ENCODE measurements at regions of chr11 and their contacts with region 1.

Region 1: DNA sequence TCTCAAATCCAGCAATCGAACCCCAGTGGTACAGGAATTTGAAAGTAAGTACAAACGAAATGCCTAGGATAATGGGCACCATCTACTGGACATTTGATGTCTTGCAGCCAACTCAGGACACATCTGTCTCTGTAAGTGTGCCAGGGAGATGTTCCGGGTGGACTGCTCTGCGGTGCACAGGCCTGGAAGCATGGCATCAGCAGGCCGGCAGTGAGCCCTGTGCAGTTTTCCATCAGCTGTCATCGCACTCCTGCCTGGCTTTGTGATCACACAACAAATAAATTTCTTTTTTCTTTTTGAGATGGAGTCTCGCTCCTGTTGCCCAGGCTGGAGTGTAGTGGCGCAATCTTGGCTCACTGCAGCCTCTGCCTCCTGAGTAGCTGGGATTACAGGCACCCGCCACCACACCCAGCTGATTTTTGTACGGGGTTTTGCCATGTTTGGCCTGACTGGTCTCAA is 71.0 kb downstream of the JAM3 start:
- DNase-seq: peak; percentile 8 to 54
- ATAC-seq: peak; percentile 77 to 88
- H3K4me3 ChIP-seq: no peak overlapping the region
- H3K27ac ChIP-seq: no peak overlapping the region
- H3K4me1 ChIP-seq: no peaks in the 10 kb centered on the region
- CTCF ChIP-seq: peak; percentile 38
- EP300 ChIP-seq: no peak
- POLR2A ChIP-seq: no peak
- RAD21 ChIP-seq: peak; percentile 34 to 60; a peak in 3 of 5 replicates

Region 2: GRCh38 chr11:133927690-133928627 is 211.9 kb before region 1 on chr11:
- CTCF ChIA-PET with region 1: interaction called, 12 read pairs
- POLR2A ChIA-PET with region 1: no interaction called
- DNase-seq: peak; percentile 59 to 73
- ATAC-seq: peak; percentile 89 to 94
- H3K4me3 ChIP-seq: no peak overlapping the region
- H3K27ac ChIP-seq: no peak overlapping the region
- H3K4me1 ChIP-seq: no peaks in the 10 kb centered on the region
- CTCF ChIP-seq: peak; percentile 50
- EP300 ChIP-seq: no peak
- POLR2A ChIP-seq: no peak
- RAD21 ChIP-seq: peak; percentile 69 to 74

Region 3: GRCh38 chr11:133988686-133989410 is 151.1 kb before region 1 on chr11:
- CTCF ChIA-PET with region 1: no interaction called
- POLR2A ChIA-PET with region 1: no interaction called
- DNase-seq: no peak
- ATAC-seq: no peak
- H3K4me3 ChIP-seq: no peak overlapping the region
- H3K27ac ChIP-seq: no peak overlapping the region
- H3K4me1 ChIP-seq: no peaks in the 10 kb centered on the region
- CTCF ChIP-seq: no peak
- EP300 ChIP-seq: no peak
- POLR2A ChIP-seq: no peak
- RAD21 ChIP-seq: no peak

Region 4: GRCh38 chr11:134120143-134120850 is 19.6 kb before region 1 on chr11:
- CTCF ChIA-PET with region 1: no interaction called
- POLR2A ChIA-PET with region 1: no interaction called
- DNase-seq: no peak
- ATAC-seq: no peak
- H3K4me3 ChIP-seq: no peak overlapping the region
- H3K27ac ChIP-seq: no peak overlapping the region
- H3K4me1 ChIP-seq: no peaks in the 10 kb centered on the region
- CTCF ChIP-seq: no peak
- EP300 ChIP-seq: no peak
- POLR2A ChIP-seq: no peak
- RAD21 ChIP-seq: no peak

Region 5: DNA sequence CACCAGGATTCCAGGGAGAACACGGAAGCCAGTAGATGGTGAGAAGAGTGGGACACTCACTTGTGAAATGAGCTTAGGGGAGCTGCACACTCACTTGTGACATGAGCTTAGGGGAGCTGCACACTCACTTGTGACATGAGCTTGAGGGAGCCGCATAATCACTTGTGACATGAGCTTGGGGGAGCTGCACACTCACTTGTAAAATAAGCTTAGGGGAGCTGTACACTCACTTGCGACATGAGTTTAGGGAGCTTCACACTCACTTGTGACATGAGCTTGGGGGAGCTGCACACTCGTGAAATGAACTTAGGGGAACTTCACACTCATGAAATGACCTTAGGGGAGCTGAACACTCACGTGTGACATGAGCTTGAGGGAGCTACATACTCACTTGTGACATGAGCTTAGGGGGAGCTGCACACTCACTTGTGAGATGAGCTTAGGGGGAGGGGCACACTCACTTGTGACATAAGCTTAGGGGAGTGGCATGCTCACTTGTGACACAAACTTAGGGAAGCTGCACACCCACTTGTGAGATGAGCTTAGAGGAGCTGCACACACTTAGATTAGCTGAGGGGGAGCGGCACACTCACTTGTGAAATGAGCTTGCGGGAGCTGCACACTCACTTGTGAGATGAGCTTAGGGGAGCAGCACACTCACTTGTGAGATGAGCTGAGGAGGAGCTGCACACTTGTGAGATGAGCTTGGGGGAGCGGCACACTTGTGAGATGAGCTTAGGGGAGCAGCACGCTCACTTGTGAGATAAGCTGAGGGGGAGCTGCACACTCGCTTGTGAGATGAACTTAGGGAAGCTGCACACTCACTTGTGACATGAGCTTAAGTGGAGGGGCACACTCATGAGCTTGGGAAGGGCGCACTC is 24.8 kb after region 1 on chr11:
- CTCF ChIA-PET with region 1: no interaction called
- POLR2A ChIA-PET with region 1: no interaction called
- DNase-seq: peak in 1 of 2 experiments; percentile 71
- ATAC-seq: no peak
- H3K4me3 ChIP-seq: no peak overlapping the region
- H3K27ac ChIP-seq: no peak overlapping the region
- H3K4me1 ChIP-seq: no peaks in the 10 kb centered on the region
- CTCF ChIP-seq: no peak
- EP300 ChIP-seq: no peak
- POLR2A ChIP-seq: no peak
- RAD21 ChIP-seq: no peak